Testis (tissue), 5 donors: ENCODE measurements at regions of chr11 and their contacts with region 1.

Region 1: DNA sequence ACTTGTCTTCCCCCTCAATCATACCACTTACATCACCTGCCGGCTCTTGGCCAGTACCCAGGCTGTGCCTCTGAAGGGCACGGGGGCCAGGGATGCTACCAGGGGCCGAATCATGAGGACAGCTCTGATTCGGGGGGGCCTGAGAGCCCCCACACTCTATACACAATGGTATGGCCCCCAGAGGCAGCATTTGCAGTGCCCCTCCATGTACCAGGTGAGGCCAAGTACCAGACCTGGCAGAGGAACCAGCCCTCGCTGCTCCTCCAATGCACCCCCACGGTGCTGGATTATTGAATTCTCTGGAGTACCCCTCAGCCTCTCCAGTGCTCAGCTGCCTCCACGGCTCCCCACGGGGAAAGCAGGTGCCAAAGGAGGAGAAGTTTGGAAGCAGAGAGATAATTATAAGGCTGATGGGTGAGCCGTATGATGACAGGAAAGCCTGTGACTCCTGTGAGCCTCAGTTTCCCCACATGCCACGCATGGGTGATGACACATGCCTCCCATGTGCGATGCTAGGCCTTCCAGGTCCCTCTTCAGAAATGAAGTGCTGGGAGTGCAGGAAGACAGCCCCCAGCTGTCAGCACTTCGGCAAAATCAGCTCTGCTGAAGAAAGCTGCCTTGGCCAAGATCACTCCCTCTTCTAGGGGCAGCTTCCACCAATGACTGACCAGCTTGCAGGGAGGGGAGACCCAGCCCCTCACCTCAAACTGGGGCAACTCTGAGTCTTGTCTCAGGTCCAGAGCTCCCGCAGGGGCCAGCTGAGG is 69.9 kb downstream of the THAP12 start:
- DNase-seq: no peak
- H3K4me3 ChIP-seq: no peak overlapping the region
- H3K27ac ChIP-seq: no peak overlapping the region
- H3K4me1 ChIP-seq: no peaks in the 10 kb centered on the region
- H3K27me3 ChIP-seq: no peaks in the 10 kb centered on the region
- CTCF ChIP-seq: no peak
- POLR2A ChIP-seq: no peak

Region 2: GRCh38 chr11:76197941-76198640 is 112.9 kb before region 1 on chr11:
- intact Hi-C with region 1: loop called (anchors 2 kb)
- DNase-seq: no peak
- H3K4me3 ChIP-seq: no peak overlapping the region
- H3K27ac ChIP-seq: no peak overlapping the region
- H3K4me1 ChIP-seq: no peaks in the 10 kb centered on the region
- H3K27me3 ChIP-seq: no peaks in the 10 kb centered on the region
- CTCF ChIP-seq: no peak
- POLR2A ChIP-seq: no peak

Region 3: DNA sequence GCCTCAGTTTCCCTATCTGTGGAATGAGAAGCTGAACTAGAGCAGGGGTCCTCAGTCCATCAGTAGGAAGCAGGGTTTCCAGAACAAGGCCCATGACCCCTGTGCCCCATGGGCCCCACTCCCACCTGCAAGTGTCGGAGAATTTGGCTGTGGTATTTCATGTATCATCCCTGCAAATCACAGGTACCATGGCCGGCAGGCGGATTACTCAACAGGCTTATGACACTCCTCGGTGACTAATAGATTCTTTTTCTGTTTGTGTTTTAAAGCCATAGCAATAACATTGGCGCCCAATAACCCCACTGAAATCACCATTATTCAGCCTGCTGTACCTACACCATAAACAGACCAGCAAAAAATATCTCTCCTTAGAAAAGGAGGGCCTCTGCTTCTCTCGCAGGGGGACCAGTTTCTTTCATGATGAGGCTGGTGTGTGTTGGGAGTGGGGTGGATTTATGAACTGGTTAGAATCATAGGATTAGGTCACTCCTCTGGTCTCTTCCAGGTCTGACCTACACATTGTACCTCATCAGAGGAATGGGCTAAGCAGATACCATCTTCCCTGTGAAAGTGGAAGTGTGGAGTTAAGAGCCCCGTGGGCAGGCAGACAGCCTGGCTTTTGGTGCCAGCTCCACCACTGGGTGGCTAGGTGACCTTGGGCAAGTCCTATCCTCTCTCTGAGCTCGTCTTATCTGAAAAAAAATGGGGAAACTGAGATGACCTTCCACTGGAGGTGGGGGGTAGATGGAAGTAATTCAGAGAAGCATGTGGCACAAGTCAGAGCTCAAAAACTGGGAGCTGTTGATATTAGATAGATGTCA is 44.5 kb before region 1 on chr11:
- intact Hi-C with region 1: no loop called
- DNase-seq: no peak
- H3K4me3 ChIP-seq: no peak overlapping the region
- H3K27ac ChIP-seq: peak overlapping the region in 1 of 2 donors; percentile 56
- H3K4me1 ChIP-seq: peaks cover 21% of the 10 kb centered on the region
- H3K27me3 ChIP-seq: no peaks in the 10 kb centered on the region
- CTCF ChIP-seq: no peak
- POLR2A ChIP-seq: no peak

Region 4: GRCh38 chr11:76391021-76391420 is 80.0 kb after region 1 on chr11:
- intact Hi-C with region 1: no loop called
- DNase-seq: no peak
- H3K4me3 ChIP-seq: no peak overlapping the region
- H3K27ac ChIP-seq: no peak overlapping the region
- H3K4me1 ChIP-seq: no peaks in the 10 kb centered on the region
- H3K27me3 ChIP-seq: no peaks in the 10 kb centered on the region
- CTCF ChIP-seq: no peak
- POLR2A ChIP-seq: no peak